ENCODE measurements at regions of chr1 and their contacts with region 1.

Region 1: GRCh38 chr1:177589187-177589795 is 380.6 kb downstream of the SEC16B start:
- DNase-seq: no peak
- H3K4me3 ChIP-seq: no peak overlapping the region
- H3K27ac ChIP-seq: no peak overlapping the region
- H3K4me1 ChIP-seq: no peaks in the 10 kb centered on the region
- H3K27me3 ChIP-seq: no peaks in the 10 kb centered on the region
- CTCF ChIP-seq: no peak

Region 2: DNA sequence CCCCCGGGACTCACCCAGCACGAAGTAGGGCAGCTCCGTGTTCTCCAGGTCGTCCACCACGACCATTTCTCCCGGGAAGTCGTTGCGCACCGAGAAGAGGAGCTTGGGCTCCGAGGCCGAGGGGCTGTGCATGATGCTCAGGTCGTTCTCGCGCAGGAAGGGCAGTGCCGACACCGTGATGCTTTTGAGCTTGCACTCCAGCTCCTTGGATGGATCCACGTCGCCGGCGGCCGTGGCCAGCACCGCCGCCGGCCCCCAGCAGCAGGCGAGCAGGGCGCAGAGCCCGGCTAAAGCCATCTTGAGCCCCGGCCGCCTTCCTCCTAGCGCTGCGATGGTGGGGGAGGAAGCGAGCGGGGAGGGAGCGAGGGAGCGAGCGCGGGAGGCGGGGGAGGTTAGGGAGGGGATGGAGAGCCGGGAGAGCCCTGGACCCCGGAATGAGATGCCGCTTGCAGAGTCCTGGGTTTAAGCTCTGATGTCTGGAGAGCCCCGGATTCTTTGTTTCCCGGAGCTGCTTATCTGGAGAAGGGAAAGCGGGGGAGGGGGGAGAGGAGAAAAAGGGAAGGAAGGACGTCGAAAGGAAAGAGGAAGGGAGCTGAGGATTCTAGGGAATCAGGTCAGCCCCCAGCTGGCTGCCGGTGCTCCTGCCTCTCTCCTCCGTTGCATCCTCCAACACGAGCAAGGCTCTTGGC is 424.8 kb before region 1 on chr1 and contains the start of gene ASTN1:
- CTCF ChIA-PET with region 1: no interaction called
- POLR2A ChIA-PET with region 1: interaction called, 14 read pairs
- intact Hi-C with region 1: no loop called
- DNase-seq: no peak
- H3K4me3 ChIP-seq: peak within 1 kb of the TSS; percentile 42
- H3K27ac ChIP-seq: no peak within 1 kb of the TSS
- H3K4me1 ChIP-seq: no peaks in the 10 kb centered on the region
- H3K27me3 ChIP-seq: peaks cover 78% of the 10 kb centered on the region
- CTCF ChIP-seq: no peak
- total RNA-seq, gene ASTN1: 0.41 and 0.46 TPM in 2 replicates

Region 3: DNA sequence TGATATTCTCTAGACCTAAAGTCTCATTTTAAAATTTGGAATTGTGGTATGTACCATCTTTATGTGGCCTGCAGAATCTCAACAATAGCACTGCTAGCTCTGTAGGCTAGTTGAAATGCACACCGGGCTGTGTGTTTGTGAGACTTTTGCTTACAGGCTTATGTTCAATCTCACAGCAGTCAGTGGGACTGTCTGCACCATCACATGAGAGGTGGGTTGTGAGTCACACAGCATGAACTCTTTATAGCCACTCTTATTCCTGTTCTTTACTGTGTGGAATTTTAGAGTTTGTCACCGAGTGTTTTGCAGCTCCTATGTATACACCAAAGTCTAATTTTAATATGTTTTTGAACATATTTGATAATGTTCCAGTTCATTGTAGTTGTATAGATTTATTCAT is 579.2 kb after region 1 on chr1:
- CTCF ChIA-PET with region 1: no interaction called
- POLR2A ChIA-PET with region 1: interaction called, 18 read pairs
- intact Hi-C with region 1: no loop called
- DNase-seq: no peak
- H3K4me3 ChIP-seq: no peak overlapping the region
- H3K27ac ChIP-seq: no peak overlapping the region
- H3K4me1 ChIP-seq: peaks cover 3% of the 10 kb centered on the region
- H3K27me3 ChIP-seq: no peaks in the 10 kb centered on the region
- CTCF ChIP-seq: no peak

Measured in A673 (cell line).